Activated T-helper 1 cell treated with anti-CD3 and anti-CD28 coated beads, Interleukin-12 subunit alpha, Interleukin-12 subunit beta, Interleukin-2, Interleukin-4 antibody, amounts not matched to agents 30 ng/mL and 10 ng/mL and 1 ng/mL, durations not matched to agents 14 hours and 24 hours and 36 hours (primary cell): ENCODE measurements at regions of chr1 and their contacts with region 1.

Region 1: DNA sequence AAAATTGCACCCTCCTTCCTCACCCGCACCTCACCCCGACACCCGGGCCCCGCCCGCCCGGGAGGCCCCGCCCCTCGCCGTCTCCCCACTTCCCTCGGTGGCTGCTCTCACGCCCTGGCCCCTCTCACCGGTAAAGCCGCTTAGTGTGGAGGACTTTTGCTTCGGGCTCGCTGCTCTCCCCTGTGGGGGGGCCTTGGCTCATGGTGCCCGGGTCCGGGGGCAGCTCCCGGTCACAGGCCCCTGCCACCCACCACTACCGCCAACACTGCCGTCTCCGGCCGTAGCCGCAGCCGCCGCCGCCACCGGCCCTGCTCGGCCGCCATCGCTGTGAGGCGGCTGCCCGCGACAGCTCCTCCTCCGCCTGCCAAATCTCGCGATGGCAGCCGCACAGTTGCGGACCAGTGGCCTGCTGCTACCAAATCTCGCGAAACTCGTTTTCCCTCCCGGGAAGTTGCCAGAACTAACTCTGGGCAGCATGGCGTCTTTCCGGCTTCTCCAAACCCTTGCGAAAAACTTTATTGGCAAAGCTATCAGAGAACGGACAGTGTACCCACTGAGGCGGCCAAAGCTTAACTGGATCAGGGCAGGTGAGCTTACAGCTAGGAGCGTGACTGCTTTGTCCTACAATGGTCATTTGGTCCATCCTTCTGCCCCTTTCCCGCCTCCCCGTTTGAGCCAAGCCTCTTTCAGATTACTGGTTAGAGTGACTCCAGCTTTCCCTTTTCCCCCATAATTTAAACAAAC is at the start of gene SMG5:
- DNase-seq: peak; percentile 94
- H3K4me3 Mint-ChIP-seq: peak within 1 kb of the TSS; percentile 91
- H3K27ac Mint-ChIP-seq: peak within 1 kb of the TSS; percentile 93
- H3K4me1 Mint-ChIP-seq: peaks cover 44% of the 10 kb centered on the region
- H3K27me3 Mint-ChIP-seq: peaks cover 1% of the 10 kb centered on the region
- total RNA-seq, gene SMG5: 95.6 TPM in 2 replicates

Region 2: DNA sequence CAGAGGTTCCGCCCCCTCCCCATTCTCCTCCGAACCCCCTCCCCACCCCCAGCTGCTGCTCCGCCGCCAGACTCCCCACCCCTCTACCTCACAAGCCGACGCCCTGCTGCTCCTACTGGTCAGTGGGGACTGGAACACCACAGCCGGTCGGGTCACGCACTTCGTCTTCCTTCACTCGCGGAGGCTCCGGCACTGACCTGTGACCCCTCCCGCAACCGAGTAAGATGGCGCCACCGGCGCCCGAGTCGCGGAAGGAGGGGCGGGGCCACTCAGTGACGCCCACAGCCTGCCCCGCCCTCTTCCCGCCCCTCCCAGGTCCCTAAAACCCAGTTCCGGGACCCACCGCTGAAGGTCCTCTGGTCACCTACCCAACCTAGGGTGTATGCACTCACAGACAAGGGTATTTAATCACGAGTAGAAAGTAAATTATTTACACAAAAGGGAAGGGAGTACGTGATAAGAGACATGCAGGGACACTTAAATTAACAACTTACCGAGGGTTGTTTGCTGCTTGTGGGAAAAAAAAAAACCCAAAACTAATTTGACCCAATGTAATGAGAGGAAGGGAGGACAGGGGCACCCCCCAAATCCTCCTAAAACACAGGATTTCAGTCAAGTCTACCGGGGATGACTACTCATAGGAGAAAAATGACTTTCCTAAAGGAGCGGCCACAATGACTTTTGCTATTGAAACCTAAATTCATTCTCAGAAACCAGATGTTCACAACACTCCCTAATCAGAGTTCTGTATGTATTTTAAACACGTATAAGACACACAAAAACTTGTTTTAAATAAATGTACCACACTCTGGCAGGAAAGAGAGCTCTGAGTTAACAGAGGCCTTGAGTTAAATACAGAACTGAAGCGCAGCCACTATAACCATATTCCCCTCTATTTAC is 371.2 kb before region 1 on chr1 and contains the start of gene RIT1:
- intact Hi-C with region 1: loop called (anchors 2 kb)
- DNase-seq: peak; percentile 81
- H3K4me3 Mint-ChIP-seq: peak within 1 kb of the TSS; percentile 98
- H3K27ac Mint-ChIP-seq: peak within 1 kb of the TSS; percentile 97
- H3K4me1 Mint-ChIP-seq: peaks cover 23% of the 10 kb centered on the region
- H3K27me3 Mint-ChIP-seq: peaks cover 2% of the 10 kb centered on the region
- total RNA-seq, gene RIT1: 20.2 and 22.3 TPM in 2 replicates

Region 3: DNA sequence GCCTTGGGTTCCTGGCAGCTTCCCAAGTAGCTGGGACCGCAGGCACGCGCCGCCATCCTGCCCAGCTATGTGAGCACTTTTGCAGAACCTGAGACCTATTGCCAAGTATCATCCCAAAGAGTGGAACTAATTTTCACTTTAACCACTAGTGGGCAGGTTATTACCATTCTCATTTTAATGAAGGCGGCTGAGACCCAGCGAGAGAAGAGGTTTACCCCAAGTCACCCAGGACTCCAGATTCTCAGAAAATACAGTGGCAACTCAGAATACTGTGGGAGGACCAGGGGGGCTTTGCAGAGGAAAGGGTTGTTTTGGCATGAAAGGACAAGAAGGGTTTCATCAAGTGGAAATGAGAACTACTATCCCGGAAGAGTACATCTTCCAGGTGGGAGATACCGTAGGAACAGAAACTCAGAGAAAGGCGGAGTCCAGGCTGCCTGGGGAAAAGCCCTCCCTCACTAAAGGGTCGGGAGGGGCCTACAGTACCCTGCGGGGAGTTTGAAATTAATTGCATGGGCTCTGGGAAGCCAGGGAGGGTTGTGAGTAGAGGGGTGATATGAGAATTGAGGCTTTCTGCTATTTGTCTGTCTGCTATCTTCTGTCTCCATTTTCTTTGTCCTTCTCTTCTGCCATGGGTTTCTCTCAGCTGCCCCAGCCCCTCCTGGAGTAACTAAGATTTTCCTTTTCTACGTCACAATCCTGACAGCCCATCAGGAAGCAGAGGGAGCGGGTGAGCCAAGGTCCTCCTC is 136.5 kb before region 1 on chr1:
- intact Hi-C with region 1: loop called (anchors 1 kb)
- DNase-seq: peak; percentile 35
- H3K4me3 Mint-ChIP-seq: peak overlapping the region; percentile 64
- H3K27ac Mint-ChIP-seq: peak overlapping the region; percentile 90
- H3K4me1 Mint-ChIP-seq: peaks cover 43% of the 10 kb centered on the region
- H3K27me3 Mint-ChIP-seq: no peaks in the 10 kb centered on the region

Region 4: DNA sequence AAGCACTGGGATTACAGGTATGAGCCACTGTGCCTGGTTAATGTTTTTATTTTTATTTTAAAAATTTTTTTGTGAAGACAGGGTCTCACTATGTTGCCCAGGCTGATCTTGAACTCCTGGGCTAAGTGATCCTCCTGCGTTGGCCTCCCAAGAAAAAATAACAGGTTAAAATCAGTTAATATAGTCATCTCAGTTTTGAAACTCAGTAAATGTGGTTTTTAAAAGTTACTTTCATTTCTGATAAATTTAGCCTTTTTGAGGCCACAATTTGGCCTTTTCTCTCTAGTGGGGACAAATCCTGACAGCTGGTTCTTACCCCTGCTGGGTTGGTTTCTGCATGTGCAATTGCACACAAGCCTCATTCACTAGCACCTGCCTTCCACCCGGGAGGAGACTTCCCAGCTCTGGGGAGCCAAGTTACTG is 56.5 kb before region 1 on chr1:
- intact Hi-C with region 1: loop called (anchors 1 kb)
- DNase-seq: no peak
- H3K4me3 Mint-ChIP-seq: peak overlapping the region; percentile 53
- H3K27ac Mint-ChIP-seq: peak overlapping the region; percentile 79
- H3K4me1 Mint-ChIP-seq: peaks cover 52% of the 10 kb centered on the region
- H3K27me3 Mint-ChIP-seq: no peaks in the 10 kb centered on the region

Region 5: DNA sequence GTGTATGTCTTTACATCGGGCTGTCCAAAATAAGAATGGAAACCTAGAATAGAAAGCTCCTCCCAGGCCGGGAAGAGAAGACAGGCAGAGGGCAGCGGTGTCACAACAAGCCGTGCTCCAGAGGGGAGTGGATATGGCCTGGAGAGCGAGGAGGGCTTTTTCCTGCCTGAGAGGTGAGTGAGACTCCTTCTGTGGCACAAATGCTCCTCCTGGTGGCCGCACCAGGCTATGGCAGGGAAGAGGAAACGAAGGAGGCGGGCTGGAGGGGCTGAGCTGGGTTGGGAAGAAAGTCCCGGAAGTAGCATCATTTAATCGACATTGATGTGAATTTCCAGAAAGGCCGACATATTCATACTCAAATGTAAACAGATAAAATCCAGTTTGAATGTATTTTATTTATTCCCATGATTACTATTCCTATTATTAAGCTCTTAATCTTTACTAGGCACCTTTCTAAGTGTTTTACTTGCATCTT is 163.2 kb after region 1 on chr1:
- intact Hi-C with region 1: loop called (anchors 5 kb)
- DNase-seq: peak; percentile 67
- H3K4me3 Mint-ChIP-seq: no peak overlapping the region
- H3K27ac Mint-ChIP-seq: no peak overlapping the region
- H3K4me1 Mint-ChIP-seq: peaks cover 25% of the 10 kb centered on the region
- H3K27me3 Mint-ChIP-seq: peaks cover 56% of the 10 kb centered on the region

Region 6: DNA sequence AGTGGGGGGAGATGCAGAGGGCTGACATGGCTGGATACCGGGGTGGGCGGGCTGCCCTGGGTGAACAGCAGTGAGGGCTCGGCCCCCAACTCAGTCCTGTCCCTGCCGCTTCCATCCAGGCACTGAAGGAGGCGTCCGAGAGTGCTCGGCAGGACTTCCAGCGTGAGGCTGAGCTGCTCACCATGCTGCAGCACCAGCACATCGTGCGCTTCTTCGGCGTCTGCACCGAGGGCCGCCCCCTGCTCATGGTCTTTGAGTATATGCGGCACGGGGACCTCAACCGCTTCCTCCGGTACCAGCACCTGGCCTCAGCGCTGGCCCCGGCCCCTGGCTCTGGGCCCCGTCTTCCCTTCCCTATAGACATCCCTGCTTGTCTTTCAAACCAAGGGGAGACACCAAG is 593.6 kb after region 1 on chr1:
- intact Hi-C with region 1: no loop called
- DNase-seq: no peak
- H3K4me3 Mint-ChIP-seq: no peak overlapping the region
- H3K27ac Mint-ChIP-seq: no peak overlapping the region
- H3K4me1 Mint-ChIP-seq: no peaks in the 10 kb centered on the region
- H3K27me3 Mint-ChIP-seq: peaks cover 4% of the 10 kb centered on the region